ENCODE measurements at regions of chr19 and their contacts with region 1.

Region 1: GRCh38 chr19:1343041-1343440 is 40.7 kb upstream of the NDUFS7 start:
- DNase-seq: no peak
- ATAC-seq: no peak
- H3K4me3 Mint-ChIP-seq: no peak overlapping the region
- H3K27ac Mint-ChIP-seq: no peak overlapping the region
- H3K4me1 Mint-ChIP-seq: peaks cover 18% of the 10 kb centered on the region
- H3K27me3 Mint-ChIP-seq: no peaks in the 10 kb centered on the region
- CTCF ChIP-seq: no peak

Region 2: DNA sequence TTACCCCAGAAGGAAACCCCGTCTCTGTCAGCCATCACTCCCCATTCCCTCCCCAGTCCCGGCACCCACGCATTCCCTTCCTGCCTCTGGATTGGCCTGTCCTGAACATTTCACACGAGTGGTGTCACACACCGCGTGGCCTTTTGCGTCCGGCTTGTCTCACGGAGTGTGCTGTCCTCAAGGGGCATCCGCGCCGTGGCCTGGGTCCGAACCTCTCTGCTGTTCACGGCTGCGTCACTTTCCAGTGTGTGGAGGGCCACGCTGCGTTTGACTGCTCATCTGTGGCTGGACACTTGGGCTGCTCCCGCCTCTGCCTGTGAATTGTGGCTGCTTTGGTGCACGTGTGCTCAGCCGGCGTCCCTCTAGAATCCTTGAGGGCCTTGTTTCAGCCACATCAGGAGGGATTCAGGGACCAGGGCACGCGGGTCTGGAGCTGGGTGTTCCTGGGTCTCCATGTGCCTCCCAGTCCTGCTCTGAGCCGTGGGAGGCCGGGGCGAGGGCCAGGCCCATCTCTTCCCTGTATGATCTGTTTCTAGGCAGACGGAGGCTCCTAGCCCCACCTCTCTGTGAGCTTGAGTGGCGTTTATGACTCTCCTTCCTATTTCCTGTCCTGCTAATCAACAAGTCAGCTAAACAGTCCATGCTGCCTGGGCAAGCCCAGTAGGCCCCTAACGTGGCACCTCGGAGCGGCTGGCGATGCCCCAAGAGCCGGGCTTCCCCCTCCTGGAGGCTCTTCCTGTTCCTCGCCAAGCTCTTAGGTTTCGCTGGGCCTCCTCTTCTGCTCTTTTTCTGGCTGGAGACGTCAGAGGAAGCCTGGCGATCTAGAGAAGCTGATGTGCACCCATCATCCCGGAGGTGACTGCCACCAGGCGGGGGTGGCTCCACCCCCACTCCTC is 129.4 kb before region 1 on chr19:
- CTCF ChIA-PET with region 1: no interaction called
- POLR2A ChIA-PET with region 1: interaction called, 13 read pairs
- intact Hi-C with region 1: no loop called
- DNase-seq: no peak
- ATAC-seq: peak; percentile 77
- H3K4me3 Mint-ChIP-seq: peak overlapping the region; percentile 67
- H3K27ac Mint-ChIP-seq: peak overlapping the region; percentile 83
- H3K4me1 Mint-ChIP-seq: peaks cover 32% of the 10 kb centered on the region
- H3K27me3 Mint-ChIP-seq: no peaks in the 10 kb centered on the region
- CTCF ChIP-seq: no peak

Region 3: DNA sequence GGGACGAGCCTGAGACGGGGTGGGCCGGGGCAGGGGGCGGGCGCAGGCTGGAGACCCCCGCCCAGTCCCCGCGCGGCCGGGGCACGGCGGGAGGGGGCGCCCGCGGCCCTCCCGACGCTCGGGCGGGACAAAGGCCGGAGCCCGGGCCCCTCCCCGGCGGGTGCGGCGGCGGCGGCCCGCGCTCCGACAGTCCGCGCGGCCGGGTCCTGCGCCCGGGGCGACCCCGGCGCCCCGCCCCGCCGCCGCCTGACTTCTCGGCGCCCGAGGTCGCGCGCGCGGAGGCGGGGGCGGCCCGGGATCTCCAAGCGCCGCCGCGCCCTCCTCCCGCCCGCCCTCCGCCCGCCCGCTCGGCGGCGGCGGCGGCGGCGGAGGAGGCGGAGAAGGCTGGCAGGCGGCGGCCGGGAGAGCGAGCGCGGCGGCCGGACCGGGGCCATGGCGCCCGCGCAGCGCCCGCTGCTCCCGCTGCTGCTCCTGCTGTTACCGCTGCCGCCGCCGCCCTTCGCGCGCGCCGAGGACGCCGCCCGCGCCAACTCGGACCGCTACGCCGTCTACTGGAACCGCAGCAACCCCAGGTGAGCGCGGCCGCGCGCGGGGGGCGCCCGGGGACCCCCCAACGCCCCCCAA is 57.2 kb before region 1 on chr19 and contains the start of gene EFNA2:
- CTCF ChIA-PET with region 1: no interaction called
- POLR2A ChIA-PET with region 1: no interaction called
- intact Hi-C with region 1: no loop called
- DNase-seq: no peak
- ATAC-seq: no peak
- H3K4me3 Mint-ChIP-seq: peak within 1 kb of the TSS; percentile 70
- H3K27ac Mint-ChIP-seq: no peak within 1 kb of the TSS
- H3K4me1 Mint-ChIP-seq: peaks cover 10% of the 10 kb centered on the region
- H3K27me3 Mint-ChIP-seq: peaks cover 32% of the 10 kb centered on the region
- CTCF ChIP-seq: no peak
- total RNA-seq, gene EFNA2: not detected in 2 replicates

Region 4: GRCh38 chr19:1307320-1307719 is 35.7 kb before region 1 on chr19:
- CTCF ChIA-PET with region 1: no interaction called
- POLR2A ChIA-PET with region 1: no interaction called
- intact Hi-C with region 1: no loop called
- DNase-seq: no peak
- ATAC-seq: no peak
- H3K4me3 Mint-ChIP-seq: no peak overlapping the region
- H3K27ac Mint-ChIP-seq: no peak overlapping the region
- H3K4me1 Mint-ChIP-seq: peaks cover 2% of the 10 kb centered on the region
- H3K27me3 Mint-ChIP-seq: no peaks in the 10 kb centered on the region
- CTCF ChIP-seq: no peak

Region 5: DNA sequence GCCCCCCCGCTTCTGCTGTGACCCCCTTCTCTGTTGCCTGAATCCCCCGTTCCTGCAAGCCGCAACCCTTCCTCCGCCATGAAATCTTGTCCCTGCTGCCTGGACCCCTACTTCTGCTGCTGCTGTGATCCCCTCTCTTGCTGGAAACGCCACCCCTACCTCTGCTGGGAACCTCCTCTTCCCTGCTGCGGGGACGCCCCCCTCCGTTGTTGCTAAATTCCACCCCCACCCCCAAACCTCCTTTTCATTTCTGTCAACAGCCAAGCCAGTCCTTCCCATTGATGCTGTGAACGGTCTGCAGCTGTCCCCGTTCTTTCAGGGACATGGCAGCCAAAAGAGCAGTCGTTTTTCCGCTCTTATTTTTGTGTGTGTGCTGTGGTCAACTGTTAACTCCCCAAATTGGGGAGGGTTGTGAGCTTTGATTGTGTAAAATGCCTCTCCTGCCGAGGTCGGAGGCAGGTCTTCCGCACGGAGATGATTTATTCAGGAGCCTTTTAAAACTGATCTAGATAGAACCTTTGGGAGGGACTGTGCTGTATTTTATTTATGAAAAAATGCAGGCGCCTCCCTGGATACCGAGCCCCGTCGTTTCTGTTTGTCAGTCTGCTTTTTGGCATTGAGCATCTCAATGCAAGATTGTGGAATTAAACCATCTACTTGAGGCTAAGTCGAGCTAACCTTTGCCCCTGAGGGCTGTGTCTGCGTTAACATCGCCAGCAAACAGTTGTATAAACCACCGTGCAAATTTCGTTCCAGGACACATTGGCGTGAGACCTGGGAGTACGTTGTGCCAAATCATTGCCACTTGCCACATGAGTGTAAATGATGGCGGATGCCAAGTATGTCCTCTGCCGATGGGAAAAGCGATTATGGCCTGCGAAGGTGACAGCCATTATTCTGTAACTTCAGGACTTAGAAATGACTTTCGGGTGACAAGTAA is 12.8 kb after region 1 on chr19:
- CTCF ChIA-PET with region 1: no interaction called
- POLR2A ChIA-PET with region 1: interaction called, 13 read pairs
- intact Hi-C with region 1: no loop called
- DNase-seq: no peak
- ATAC-seq: no peak
- H3K4me3 Mint-ChIP-seq: peak overlapping the region; percentile 86
- H3K27ac Mint-ChIP-seq: peak overlapping the region; percentile 70
- H3K4me1 Mint-ChIP-seq: peaks cover 13% of the 10 kb centered on the region
- H3K27me3 Mint-ChIP-seq: no peaks in the 10 kb centered on the region
- CTCF ChIP-seq: no peak

Region 6: GRCh38 chr19:1445185-1445931 is 102.3 kb after region 1 on chr19:
- CTCF ChIA-PET with region 1: no interaction called
- POLR2A ChIA-PET with region 1: no interaction called
- intact Hi-C with region 1: no loop called
- DNase-seq: peak; percentile 85
- ATAC-seq: peak; percentile 91
- H3K4me3 Mint-ChIP-seq: peak overlapping the region; percentile 79
- H3K27ac Mint-ChIP-seq: no peak overlapping the region
- H3K4me1 Mint-ChIP-seq: peaks cover 29% of the 10 kb centered on the region
- H3K27me3 Mint-ChIP-seq: peaks cover 21% of the 10 kb centered on the region
- CTCF ChIP-seq: peak; percentile 51